ENCODE measurements at regions of chr16 and their contacts with region 1.

Region 1: GRCh38 chr16:74724820-74725549 is 24.3 kb upstream of the MLKL start:
- DNase-seq: peak; percentile 86 to 99 (median 94)

Region 2: DNA sequence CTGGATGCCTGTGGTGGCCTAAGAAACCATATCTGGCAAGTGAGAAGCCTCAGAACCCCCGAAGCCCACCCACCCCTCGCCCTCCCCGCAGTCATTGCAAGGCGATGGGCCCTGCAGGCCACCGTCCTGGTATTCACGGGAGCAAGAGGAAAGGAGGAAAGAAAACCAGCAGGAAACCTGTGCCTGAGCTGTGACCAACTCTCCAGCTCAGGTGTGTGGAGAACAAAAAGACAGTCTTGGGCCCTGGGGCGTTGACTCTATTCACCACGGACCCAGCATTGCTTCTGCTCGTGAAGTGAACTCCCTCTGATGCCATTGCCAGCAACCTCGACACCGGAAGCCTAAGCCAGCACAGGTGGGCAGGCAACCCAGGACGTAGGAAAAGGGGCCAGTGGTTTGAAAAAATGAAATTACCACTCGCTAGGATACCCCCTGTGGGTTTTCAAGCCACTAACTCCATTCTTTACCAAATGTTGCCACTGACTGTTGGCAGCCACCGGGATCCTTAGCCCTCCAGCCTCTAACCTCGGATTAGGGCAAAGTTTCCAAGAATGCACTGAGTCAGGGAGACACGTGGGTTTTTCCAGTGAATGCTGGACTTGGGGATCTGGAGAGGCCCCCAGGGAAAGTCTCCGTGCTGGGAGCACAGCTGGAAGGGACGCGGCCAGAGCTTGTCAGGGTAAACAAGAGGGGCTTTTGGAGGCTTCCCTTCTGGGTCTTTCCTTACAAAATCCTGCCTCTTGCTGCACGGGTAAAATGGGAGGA is 24.5 kb after region 1 on chr16:
- intact Hi-C with region 1: loop called (anchors 2 kb)
- DNase-seq: peak in 1 of 10 donors; percentile 77

Region 3: DNA sequence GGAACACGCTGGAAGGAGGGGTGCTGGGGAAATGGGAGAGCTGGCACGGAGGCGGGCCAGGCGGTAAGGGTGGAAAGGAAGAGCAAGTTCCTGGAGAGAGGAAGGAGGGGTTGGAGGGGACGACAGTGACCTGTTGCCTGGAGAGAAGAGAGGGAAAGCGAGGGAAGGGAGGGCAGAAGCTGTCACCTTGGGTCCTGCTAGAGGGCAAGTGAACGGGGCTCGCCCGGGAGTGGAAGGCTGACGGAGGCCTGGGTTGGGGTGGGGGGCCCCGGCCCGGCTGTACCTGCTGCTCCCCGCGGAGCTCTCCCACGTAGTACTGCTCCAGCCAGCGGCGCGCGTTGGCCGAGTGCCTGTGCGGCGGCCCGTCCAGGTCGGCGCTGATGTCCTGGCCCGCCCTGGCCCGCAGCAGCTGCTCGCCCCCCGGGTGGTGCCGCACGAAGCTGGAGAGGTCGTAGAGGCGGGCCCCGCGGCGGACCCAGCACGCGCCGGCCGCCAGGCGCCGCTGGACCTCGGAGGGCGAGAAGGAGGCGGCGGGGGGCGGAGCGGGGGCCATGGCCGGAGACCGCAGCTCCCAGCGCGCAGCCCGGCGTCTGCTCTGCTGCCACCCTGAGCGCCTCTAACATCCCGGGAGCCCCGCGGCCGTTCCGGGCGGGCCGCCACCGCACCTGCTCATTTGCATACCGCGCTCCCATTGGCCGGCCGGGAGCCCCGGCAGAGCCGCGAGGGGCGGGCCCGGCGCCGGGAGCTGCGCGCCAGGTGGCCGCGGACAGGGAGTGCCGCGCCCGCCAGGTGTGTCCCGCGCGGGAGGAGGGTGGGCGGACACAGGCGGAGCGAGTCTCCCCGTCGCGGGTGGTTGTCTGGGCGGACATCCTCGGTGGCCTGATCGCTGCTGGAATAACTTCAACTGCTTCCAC is 49.5 kb after region 1 on chr16 and contains the start of gene FA2H:
- intact Hi-C with region 1: loop called (anchors 1 kb)
- DNase-seq: peak; percentile 82 to 99 (median 89)

Region 4: DNA sequence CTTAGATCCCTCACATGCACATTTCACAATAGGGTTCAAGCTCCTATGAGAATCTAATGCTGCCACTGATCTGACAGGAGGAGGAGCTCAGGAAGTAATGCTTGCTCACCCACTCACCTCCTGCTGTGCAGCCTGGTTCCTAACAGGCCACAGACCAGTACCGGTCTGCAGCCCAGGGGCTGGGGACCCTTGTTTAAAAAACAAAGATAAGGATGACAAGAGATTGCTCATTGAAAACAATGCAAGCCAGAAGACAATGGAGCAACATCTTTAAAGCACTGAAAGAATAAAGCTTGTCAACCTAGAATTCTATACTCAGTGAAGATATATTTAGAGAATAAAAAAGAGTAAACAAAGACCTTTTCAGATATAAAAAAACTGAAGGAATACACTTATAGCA is 72.4 kb after region 1 on chr16:
- intact Hi-C with region 1: no loop called
- DNase-seq: no peak

Measured in posterior cingulate gyrus (tissue), 11 donors.